Activated CD8-positive, alpha-beta T cell treated with anti-CD3 and anti-CD28 coated beads for 36 hours (primary cell): ENCODE measurements at regions of chr7 and their contacts with region 1.

Region 1: DNA sequence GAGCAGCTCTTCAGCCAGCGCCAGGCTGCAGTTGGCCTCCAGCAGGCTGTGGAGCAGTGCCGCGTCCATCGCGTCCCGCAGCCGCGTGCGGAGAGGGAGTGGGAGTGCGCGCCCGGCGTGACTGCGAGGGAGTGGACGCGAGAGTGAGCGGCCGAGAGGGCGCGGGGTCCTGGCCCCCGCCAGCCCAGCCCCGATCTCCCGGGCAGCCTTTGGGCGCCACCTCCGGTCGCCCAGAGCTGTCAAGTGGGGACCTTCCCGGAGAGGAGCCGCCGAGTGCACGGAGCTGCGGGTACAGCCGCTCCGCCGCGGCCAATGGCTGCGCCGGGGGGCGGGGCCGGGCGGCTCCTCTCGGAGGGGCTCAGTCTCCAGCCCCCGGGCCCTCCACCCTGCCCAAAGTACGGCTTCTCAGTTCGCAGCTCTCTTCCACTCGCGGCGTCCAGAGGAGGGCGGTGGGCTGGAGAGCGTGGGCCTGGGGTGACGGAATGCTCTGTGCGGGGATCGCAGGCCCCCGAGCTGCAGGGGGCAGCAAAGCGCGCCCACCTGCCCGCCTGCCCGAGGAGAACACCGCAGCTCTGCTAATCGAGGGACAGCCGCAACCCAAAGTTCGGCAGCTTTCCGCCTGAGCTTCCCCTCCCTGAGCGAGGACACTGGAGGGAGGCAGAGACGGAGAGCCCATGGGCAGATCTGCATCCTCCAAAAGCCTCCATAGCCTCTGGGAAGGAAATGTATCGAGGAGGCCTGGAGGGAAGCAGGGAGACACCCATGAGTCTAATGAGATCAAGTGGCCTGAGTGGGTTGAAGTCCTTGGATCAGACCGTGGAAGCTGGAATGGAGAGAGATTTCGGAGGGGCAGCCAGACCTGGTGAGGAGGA is at the start of gene CRHR2:
- DNase-seq: peak; percentile 56
- ATAC-seq: peak; percentile 90
- H3K4me3 Mint-ChIP-seq: peak within 1 kb of the TSS; percentile 61
- H3K27ac Mint-ChIP-seq: no peak within 1 kb of the TSS
- H3K4me1 Mint-ChIP-seq: peaks cover 10% of the 10 kb centered on the region
- H3K27me3 Mint-ChIP-seq: peaks cover 44% of the 10 kb centered on the region
- CTCF ChIP-seq: peak; percentile 52
- total RNA-seq, gene CRHR2: not detected

Region 2: DNA sequence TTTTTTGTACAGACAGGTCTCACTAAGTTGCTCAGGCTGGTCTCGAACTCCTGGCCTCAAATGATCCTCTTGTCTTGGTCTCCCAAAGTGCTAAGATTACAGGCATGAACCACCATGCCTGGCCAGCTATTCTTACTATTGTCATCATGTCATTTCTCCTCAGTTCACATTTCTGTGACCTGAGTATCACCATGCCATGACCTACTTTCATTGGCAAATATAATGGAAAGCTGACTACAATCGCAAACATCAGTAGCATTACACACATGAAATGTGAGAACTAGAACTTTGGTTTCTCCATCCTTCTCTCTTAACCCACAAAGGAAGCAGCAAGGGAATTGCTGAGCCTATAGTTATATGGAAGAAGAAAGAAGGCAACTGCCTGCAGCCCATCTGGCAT is 902.1 kb before region 1 on chr7:
- CTCF ChIA-PET with region 1: no interaction called
- POLR2A ChIA-PET with region 1: no interaction called
- intact Hi-C with region 1: no loop called
- DNase-seq: no peak
- ATAC-seq: no peak
- H3K4me3 Mint-ChIP-seq: no peak overlapping the region
- H3K27ac Mint-ChIP-seq: no peak overlapping the region
- H3K4me1 Mint-ChIP-seq: no peaks in the 10 kb centered on the region
- H3K27me3 Mint-ChIP-seq: peaks cover 16% of the 10 kb centered on the region
- CTCF ChIP-seq: no peak

Region 3: GRCh38 chr7:30564243-30564892 is 118.1 kb before region 1 on chr7:
- CTCF ChIA-PET with region 1: no interaction called
- POLR2A ChIA-PET with region 1: no interaction called
- intact Hi-C with region 1: no loop called
- DNase-seq: peak; percentile 82
- ATAC-seq: peak; percentile 96
- H3K4me3 Mint-ChIP-seq: no peak overlapping the region
- H3K27ac Mint-ChIP-seq: no peak overlapping the region
- H3K4me1 Mint-ChIP-seq: peaks cover 2% of the 10 kb centered on the region
- H3K27me3 Mint-ChIP-seq: no peaks in the 10 kb centered on the region
- CTCF ChIP-seq: peak; percentile 90

Region 4: DNA sequence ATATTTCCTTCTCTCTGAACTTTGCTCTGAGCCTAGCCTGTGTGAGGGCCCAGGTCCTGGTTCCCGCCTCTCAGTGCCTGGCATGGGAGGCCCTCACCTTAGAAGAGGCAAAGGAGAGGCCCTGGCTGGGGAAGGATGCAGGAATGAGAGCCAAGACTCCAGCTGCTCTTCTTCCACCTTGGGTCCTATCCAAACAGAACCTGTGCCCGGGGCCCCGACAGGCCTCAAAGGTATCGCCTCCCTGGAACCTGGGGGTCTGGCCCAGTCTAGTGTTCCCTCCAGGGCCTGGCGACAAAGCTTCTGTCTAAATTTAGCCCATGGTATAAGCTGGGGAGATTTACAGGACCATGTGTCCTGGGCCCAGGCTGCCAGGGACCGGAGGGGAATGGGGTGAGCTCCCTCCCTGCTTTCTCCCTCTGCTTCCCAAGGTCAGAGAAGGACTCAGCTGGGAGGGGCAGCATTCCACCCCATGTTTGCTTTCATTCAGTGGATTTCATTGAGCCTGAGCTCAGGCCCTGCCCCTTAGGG is 11.8 kb after region 1 on chr7:
- CTCF ChIA-PET with region 1: interaction called, 14 read pairs
- POLR2A ChIA-PET with region 1: no interaction called
- intact Hi-C with region 1: no loop called
- DNase-seq: no peak
- ATAC-seq: no peak
- H3K4me3 Mint-ChIP-seq: no peak overlapping the region
- H3K27ac Mint-ChIP-seq: no peak overlapping the region
- H3K4me1 Mint-ChIP-seq: peaks cover 3% of the 10 kb centered on the region
- H3K27me3 Mint-ChIP-seq: peaks cover 2% of the 10 kb centered on the region
- CTCF ChIP-seq: no peak